A673 (cell line): ENCODE measurements at regions of chr7 and their contacts with region 1.

Region 1: DNA sequence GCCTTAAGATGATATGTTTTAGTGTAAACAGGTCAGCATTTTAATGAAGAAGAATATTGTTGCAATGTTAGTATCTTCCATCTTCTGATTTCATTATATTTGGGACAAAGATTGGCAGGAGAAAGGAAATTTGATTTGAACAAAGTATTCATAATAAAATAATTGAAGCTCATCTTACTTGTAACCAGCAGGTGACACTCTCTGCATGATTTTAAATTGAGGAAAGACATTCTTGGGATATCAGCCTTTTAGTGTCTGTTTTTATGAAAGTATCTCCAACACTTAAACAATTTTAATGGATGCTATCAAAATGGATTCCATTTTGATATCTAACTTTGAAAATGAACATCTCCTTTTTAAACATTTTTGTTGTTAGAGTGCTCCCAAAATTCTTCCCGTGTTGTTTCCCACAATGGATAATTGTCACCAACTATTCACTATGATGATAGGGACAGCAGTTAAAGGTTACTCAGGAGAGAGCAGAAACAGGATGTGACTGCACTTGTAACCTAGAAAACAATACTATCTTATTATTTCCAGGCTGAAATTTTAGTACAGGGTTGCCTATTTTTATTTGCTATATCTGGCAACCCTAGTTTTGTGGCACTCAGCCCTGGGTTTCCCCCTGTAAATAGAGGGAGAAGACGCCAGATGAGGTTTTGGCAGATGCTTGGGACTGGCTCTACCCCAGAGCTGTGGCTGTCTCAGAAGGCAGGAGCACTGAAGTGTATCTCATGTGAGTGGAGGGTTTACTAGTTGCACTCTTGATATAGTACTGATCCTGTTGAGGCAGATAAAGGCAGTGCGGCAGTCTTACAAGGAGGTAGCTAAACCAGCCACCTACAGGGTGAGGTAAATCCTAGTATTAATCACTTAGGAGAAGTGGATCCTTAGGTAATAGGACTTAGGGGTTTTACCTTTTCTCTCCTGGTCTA is 31.0 kb upstream of the ABCB4 start:
- DNase-seq: peak; percentile 14
- H3K4me3 ChIP-seq: no peak overlapping the region
- H3K27ac ChIP-seq: no peak overlapping the region
- H3K4me1 ChIP-seq: no peaks in the 10 kb centered on the region
- H3K27me3 ChIP-seq: peaks cover 4% of the 10 kb centered on the region
- CTCF ChIP-seq: peak; percentile 57

Region 2: GRCh38 chr7:87312215-87312865 is 194.2 kb before region 1 on chr7:
- CTCF ChIA-PET with region 1: no interaction called
- POLR2A ChIA-PET with region 1: no interaction called
- intact Hi-C with region 1: loop called (anchors 5 kb)
- DNase-seq: peak; percentile 60
- H3K4me3 ChIP-seq: no peak overlapping the region
- H3K27ac ChIP-seq: no peak overlapping the region
- H3K4me1 ChIP-seq: no peaks in the 10 kb centered on the region
- H3K27me3 ChIP-seq: no peaks in the 10 kb centered on the region
- CTCF ChIP-seq: peak; percentile 97

Region 3: GRCh38 chr7:87456247-87456646 is 50.3 kb before region 1 on chr7:
- CTCF ChIA-PET with region 1: no interaction called
- POLR2A ChIA-PET with region 1: no interaction called
- intact Hi-C with region 1: no loop called
- DNase-seq: no peak
- H3K4me3 ChIP-seq: no peak overlapping the region
- H3K27ac ChIP-seq: no peak overlapping the region
- H3K4me1 ChIP-seq: no peaks in the 10 kb centered on the region
- H3K27me3 ChIP-seq: peaks cover 19% of the 10 kb centered on the region
- CTCF ChIP-seq: no peak

Region 4: DNA sequence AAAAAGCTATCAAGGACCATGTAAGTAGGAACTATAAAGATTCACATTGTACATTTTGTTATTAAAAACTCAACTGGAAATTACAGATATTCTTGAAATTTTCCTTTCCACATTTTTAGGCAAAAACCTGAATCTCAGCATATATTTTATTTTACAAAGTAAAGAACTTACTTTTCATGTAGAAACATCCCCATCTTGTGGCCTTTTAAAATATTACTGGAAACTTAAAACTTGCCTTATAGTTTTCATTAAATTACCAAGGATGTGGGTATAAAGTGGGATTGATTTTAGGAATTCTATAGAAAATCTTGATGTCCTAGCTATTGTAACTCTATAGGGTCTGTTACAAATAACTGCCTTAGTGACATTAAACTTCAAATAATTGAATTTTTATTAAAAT is 380.4 kb after region 1 on chr7:
- CTCF ChIA-PET with region 1: no interaction called
- POLR2A ChIA-PET with region 1: no interaction called
- intact Hi-C with region 1: loop called (anchors 5 kb)
- DNase-seq: peak; percentile 55
- H3K4me3 ChIP-seq: no peak overlapping the region
- H3K27ac ChIP-seq: no peak overlapping the region
- H3K4me1 ChIP-seq: no peaks in the 10 kb centered on the region
- H3K27me3 ChIP-seq: no peaks in the 10 kb centered on the region
- CTCF ChIP-seq: peak; percentile 54; the same call in 1 of the 2 replicates

Region 5: DNA sequence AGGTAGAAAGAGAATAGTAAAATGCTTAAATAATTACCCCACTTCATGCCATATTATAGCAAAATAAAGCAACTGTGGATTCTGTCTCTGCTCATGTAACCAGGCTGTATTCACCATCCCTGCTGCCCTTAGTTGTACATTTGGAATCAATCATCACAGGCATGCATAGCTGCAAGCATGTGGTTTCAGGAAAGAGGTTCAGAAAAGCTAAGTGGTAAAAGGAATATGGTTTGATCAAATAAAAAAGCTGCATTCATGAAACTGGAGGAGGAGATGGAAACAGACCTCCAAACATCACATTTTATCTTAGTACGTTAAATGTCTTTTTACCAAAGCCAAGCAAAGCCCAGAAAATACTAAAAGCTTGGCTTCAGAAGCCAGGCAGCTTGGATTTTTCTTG is 508.8 kb after region 1 on chr7:
- CTCF ChIA-PET with region 1: no interaction called
- POLR2A ChIA-PET with region 1: no interaction called
- intact Hi-C with region 1: no loop called
- DNase-seq: no peak
- H3K4me3 ChIP-seq: no peak overlapping the region
- H3K27ac ChIP-seq: no peak overlapping the region
- H3K4me1 ChIP-seq: no peaks in the 10 kb centered on the region
- H3K27me3 ChIP-seq: no peaks in the 10 kb centered on the region
- CTCF ChIP-seq: no peak

Region 6: GRCh38 chr7:88111136-88111743 is 604.7 kb after region 1 on chr7:
- CTCF ChIA-PET with region 1: no interaction called
- POLR2A ChIA-PET with region 1: no interaction called
- intact Hi-C with region 1: loop called (anchors 10 kb)
- DNase-seq: peak; percentile 57
- H3K4me3 ChIP-seq: no peak overlapping the region
- H3K27ac ChIP-seq: no peak overlapping the region
- H3K4me1 ChIP-seq: peaks cover under 1% of the 10 kb centered on the region
- H3K27me3 ChIP-seq: no peaks in the 10 kb centered on the region
- CTCF ChIP-seq: peak; percentile 71

Region 7: GRCh38 chr7:88169717-88170320 is 663.3 kb after region 1 on chr7:
- CTCF ChIA-PET with region 1: no interaction called
- POLR2A ChIA-PET with region 1: no interaction called
- intact Hi-C with region 1: loop called (anchors 10 kb)
- DNase-seq: peak; percentile 19
- H3K4me3 ChIP-seq: no peak overlapping the region
- H3K27ac ChIP-seq: no peak overlapping the region
- H3K4me1 ChIP-seq: no peaks in the 10 kb centered on the region
- H3K27me3 ChIP-seq: no peaks in the 10 kb centered on the region
- CTCF ChIP-seq: peak; percentile 70